CD4-positive, alpha-beta T cell (primary cell): ENCODE measurements at regions of chr17 and their contacts with region 1.

Region 1: GRCh38 chr17:48351831-48352332 is 78.1 kb downstream of the SKAP1 start:
- DNase-seq: peak in 3 of 14 experiments; percentile 57 to 71 (median 68)
- ATAC-seq: peak; percentile 76
- H3K4me3 ChIP-seq: no peak overlapping the region
- H3K4me3 Mint-ChIP-seq: no peak overlapping the region
- H3K27ac ChIP-seq: no peak overlapping the region
- H3K27ac Mint-ChIP-seq: no peak overlapping the region
- H3K4me1 ChIP-seq: no peaks in the 10 kb centered on the region
- H3K4me1 Mint-ChIP-seq: peaks cover 27% of the 10 kb centered on the region
- H3K27me3 ChIP-seq: no peaks in the 10 kb centered on the region
- H3K27me3 Mint-ChIP-seq: no peaks in the 10 kb centered on the region
- CTCF ChIP-seq: peak; percentile 93

Region 2: GRCh38 chr17:48335858-48336500 is 15.9 kb before region 1 on chr17:
- CTCF ChIA-PET with region 1: interaction called, 26 read pairs
- POLR2A ChIA-PET with region 1: no interaction called
- intact Hi-C with region 1: no loop called
- DNase-seq: peak in 3 of 14 experiments; percentile 74 to 79 (median 76)
- ATAC-seq: peak; percentile 66
- H3K4me3 ChIP-seq: no peak overlapping the region
- H3K4me3 Mint-ChIP-seq: no peak overlapping the region
- H3K27ac ChIP-seq: no peak overlapping the region
- H3K27ac Mint-ChIP-seq: no peak overlapping the region
- H3K4me1 ChIP-seq: no peaks in the 10 kb centered on the region
- H3K4me1 Mint-ChIP-seq: peaks cover 6% of the 10 kb centered on the region
- H3K27me3 ChIP-seq: no peaks in the 10 kb centered on the region
- H3K27me3 Mint-ChIP-seq: no peaks in the 10 kb centered on the region
- CTCF ChIP-seq: peak; percentile 85

Region 3: DNA sequence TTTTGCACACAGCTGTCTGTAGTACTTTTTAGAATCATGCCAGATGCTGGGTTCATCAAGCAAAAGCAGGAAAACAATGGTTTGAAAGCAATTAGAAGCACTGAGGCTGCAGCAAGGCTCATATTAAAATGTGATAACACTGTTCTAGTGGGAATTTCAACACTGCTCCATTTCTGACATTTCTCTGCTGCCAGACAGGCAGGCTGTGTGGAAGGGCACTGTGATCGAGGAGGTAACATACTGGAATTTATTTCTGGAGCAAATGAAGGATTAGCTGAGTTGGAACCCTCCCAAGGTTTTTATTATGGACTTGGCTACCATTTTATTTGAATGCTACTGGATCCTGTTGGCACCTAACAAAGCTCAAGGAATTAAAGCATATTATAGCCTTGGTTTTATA is 11.3 kb after region 1 on chr17:
- CTCF ChIA-PET with region 1: interaction called, 19 read pairs
- POLR2A ChIA-PET with region 1: interaction called, 9 read pairs
- intact Hi-C with region 1: no loop called
- DNase-seq: no peak
- ATAC-seq: no peak
- H3K4me3 ChIP-seq: no peak overlapping the region
- H3K4me3 Mint-ChIP-seq: no peak overlapping the region
- H3K27ac ChIP-seq: no peak overlapping the region
- H3K27ac Mint-ChIP-seq: peak overlapping the region; percentile 18
- H3K4me1 ChIP-seq: peaks cover 3% of the 10 kb centered on the region
- H3K4me1 Mint-ChIP-seq: peaks cover 67% of the 10 kb centered on the region
- H3K27me3 ChIP-seq: no peaks in the 10 kb centered on the region
- H3K27me3 Mint-ChIP-seq: no peaks in the 10 kb centered on the region
- CTCF ChIP-seq: no peak

Region 4: DNA sequence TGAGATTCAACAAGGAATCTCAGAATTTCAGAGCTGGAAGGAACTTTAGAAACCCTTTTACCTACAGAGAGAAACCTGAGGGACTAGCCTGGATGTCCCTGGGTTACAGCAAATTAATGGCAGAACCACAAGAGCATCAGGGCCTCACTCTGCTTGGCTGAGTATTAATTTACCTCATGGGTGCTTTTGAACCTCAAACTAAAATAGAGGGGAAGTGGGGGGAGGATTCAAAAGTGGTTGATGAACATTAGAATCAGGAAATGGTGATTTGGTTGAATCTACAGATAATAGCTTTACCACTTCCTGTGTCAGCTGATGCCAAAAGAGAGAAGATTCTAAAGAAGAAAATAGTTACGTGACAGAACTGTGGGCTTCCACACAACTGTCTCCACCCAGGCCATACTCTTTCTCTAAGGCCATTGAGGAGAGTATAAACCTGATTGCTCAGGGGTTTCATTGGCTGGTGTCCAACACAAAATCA is 89.4 kb after region 1 on chr17:
- CTCF ChIA-PET with region 1: interaction called, 3 read pairs
- POLR2A ChIA-PET with region 1: no interaction called
- intact Hi-C with region 1: loop called in 1 of 2 experiments (anchors 5 kb)
- DNase-seq: peak in 9 of 14 experiments; percentile 7 to 94 (median 31)
- ATAC-seq: peak; percentile 66
- H3K4me3 ChIP-seq: peak overlapping the region; percentile 1
- H3K4me3 Mint-ChIP-seq: peak overlapping the region; percentile 36
- H3K27ac ChIP-seq: peak overlapping the region; percentile 66 to 72
- H3K27ac Mint-ChIP-seq: peak overlapping the region; percentile 95
- H3K4me1 ChIP-seq: peaks cover 98% of the 10 kb centered on the region
- H3K4me1 Mint-ChIP-seq: peaks cover 94% of the 10 kb centered on the region
- H3K27me3 ChIP-seq: no peaks in the 10 kb centered on the region
- H3K27me3 Mint-ChIP-seq: no peaks in the 10 kb centered on the region
- CTCF ChIP-seq: no peak

Region 5: DNA sequence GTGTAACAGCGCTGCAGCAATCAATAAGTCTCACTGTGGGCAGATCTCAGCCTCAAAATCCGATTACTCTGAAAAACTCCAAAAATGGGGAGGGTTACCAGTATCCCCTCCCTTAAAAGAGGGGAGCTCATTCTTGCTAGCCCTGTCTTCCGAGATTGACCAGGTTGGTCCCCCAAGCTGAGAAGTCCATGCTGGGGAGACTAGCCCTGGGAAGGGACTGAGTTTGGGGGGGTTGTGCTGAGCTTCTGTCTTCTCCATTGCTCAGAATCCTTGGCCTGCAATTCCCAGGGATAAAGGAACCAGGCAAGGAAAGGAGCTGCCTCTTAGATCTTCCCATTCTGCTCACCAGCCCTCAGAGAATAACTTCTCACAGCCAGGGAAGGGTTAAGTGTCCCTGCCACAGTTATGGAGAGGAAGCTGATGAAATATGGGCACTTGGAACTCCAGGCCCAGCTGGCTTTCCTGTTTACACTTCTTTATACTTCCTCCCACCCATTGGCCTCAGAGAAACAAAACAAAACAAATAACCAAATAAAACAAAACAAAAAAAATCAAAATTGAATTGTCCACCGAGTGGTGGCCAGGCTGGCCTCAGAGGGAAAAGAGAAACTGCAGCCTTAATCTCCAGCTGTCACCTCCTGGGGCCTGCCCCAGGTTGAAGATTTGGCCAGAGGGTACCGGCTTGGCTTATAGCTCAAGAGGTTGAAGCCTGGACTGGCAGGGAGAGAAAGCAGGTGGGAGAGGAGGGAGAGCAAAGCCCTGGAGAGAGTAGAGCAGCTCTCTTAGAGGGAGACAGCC is 235.6 kb after region 1 on chr17:
- CTCF ChIA-PET with region 1: interaction called, 12 read pairs
- POLR2A ChIA-PET with region 1: no interaction called
- intact Hi-C with region 1: no loop called
- DNase-seq: no peak
- ATAC-seq: no peak
- H3K4me3 ChIP-seq: no peak overlapping the region
- H3K4me3 Mint-ChIP-seq: peak overlapping the region; percentile 27
- H3K27ac ChIP-seq: no peak overlapping the region
- H3K27ac Mint-ChIP-seq: no peak overlapping the region
- H3K4me1 ChIP-seq: peaks cover 31% of the 10 kb centered on the region
- H3K4me1 Mint-ChIP-seq: peaks cover 27% of the 10 kb centered on the region
- H3K27me3 ChIP-seq: peaks cover 70 to 87% of the 10 kb centered on the region in 2 experiments
- H3K27me3 Mint-ChIP-seq: peaks cover 100% of the 10 kb centered on the region
- CTCF ChIP-seq: no peak

Region 6: GRCh38 chr17:48997083-48997826 is 645.4 kb after region 1 on chr17 and contains the start of gene IGF2BP1:
- CTCF ChIA-PET with region 1: no interaction called
- POLR2A ChIA-PET with region 1: no interaction called
- intact Hi-C with region 1: no loop called
- DNase-seq: peak in 3 of 14 experiments; percentile 26 to 48 (median 47)
- ATAC-seq: peak; percentile 38
- H3K4me3 ChIP-seq: peak within 1 kb of the TSS; percentile 24
- H3K4me3 Mint-ChIP-seq: peak within 1 kb of the TSS; percentile 72
- H3K27ac ChIP-seq: no peak within 1 kb of the TSS
- H3K27ac Mint-ChIP-seq: no peak within 1 kb of the TSS
- H3K4me1 ChIP-seq: peaks cover 36% of the 10 kb centered on the region
- H3K4me1 Mint-ChIP-seq: peaks cover 35% of the 10 kb centered on the region
- H3K27me3 ChIP-seq: peaks cover 60 to 96% of the 10 kb centered on the region in 2 experiments
- H3K27me3 Mint-ChIP-seq: peaks cover 92% of the 10 kb centered on the region
- CTCF ChIP-seq: no peak
- total RNA-seq, gene IGF2BP1: not detected